Ovary (tissue), 10 donors: ENCODE measurements at regions of chr1 and their contacts with region 1.

Region 1: DNA sequence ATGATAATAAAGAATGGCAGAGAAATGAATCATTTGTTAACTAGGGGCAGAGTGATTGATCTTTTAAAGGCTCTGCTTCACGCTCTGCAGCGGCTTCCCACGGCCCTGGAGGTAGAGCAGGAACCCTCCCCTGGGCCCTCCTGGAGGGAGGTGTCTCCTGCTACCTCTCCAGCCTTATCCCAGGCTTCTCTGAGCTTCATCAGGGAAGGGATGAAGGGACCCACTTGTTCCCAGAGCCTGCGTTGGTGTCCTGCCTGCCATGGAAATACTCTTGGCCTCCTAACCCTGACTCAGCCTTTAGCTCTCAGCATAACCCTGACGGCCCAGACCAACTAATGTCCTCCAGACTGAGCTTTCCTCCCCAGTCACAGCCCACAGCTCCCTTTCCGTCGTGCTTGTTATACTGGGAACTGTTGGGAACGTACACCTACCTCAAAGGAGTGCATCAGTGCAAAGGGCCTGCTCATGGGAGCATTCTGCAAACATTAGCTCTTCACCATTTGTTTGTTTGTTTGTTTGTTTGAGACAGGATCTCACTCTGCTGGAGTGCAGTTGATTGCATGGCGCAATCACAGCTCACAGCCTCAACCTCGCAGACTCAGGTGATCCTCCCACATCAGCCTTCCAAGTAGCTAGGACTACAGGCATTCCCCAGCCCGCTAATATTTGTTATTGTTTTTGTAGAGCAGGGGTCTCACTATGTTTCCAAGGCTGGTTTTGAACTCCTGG is 17.4 kb upstream of the HNRNPU start:
- DNase-seq: no peak
- H3K4me3 ChIP-seq: no peak overlapping the region
- H3K27ac ChIP-seq: no peak overlapping the region
- H3K4me1 ChIP-seq: no peaks in the 10 kb centered on the region
- H3K27me3 ChIP-seq: no peaks in the 10 kb centered on the region
- CTCF ChIP-seq: no peak
- EP300 ChIP-seq: no peak
- POLR2A ChIP-seq: no peak

Region 2: DNA sequence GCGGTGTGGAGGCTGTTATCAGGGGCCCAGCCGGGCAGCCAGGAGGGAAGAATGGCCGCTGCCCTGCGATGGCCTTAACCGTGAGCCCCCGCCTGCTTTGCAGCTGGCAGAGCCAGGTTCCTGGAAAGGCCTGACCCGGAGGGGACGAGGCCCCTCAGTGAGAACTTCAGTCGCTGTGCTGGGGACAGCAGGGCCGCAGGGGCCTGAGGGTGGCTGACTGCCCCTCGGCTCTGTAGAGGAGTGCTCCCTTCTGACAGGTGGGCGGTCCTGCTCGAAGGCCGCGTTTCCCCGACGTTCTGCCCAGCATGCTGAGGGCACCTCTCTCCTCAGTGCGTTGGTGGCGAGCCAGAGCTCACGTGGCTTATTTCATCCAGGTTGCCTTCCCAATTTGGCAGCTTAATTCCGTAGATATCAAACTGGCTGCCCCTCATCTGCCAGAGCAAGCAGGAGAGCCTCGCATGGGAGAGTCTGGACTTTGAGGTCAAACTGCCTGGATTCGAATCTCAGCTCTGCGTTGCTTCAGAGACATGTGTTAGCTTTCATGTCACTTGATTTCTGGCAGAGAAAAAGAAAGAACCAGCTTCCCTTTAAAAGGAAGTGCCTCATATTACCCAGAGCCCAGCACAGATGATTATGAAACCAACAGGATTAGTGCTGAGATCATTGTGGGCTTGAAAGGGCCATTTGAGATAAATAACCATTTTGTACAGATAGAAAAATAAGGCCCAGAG is 1386.1 kb before region 1 on chr1:
- intact Hi-C with region 1: no loop called
- DNase-seq: no peak
- H3K4me3 ChIP-seq: no peak overlapping the region
- H3K27ac ChIP-seq: no peak overlapping the region
- H3K4me1 ChIP-seq: no peaks in the 10 kb centered on the region
- H3K27me3 ChIP-seq: no peaks in the 10 kb centered on the region
- CTCF ChIP-seq: no peak
- EP300 ChIP-seq: no peak
- POLR2A ChIP-seq: no peak

Region 3: GRCh38 chr1:244757091-244757939 is 124.4 kb before region 1 on chr1:
- intact Hi-C with region 1: loop called in 1 of 4 experiments (anchors 2 kb)
- DNase-seq: no peak
- H3K4me3 ChIP-seq: no peak overlapping the region
- H3K27ac ChIP-seq: no peak overlapping the region
- H3K4me1 ChIP-seq: peaks cover 8% of the 10 kb centered on the region
- H3K27me3 ChIP-seq: no peaks in the 10 kb centered on the region
- CTCF ChIP-seq: no peak
- EP300 ChIP-seq: no peak
- POLR2A ChIP-seq: no peak

Region 4: GRCh38 chr1:244896550-244896949 is 14.8 kb after region 1 on chr1:
- intact Hi-C with region 1: no loop called
- DNase-seq: no peak
- H3K4me3 ChIP-seq: no peak overlapping the region
- H3K27ac ChIP-seq: no peak overlapping the region
- H3K4me1 ChIP-seq: no peaks in the 10 kb centered on the region
- H3K27me3 ChIP-seq: no peaks in the 10 kb centered on the region
- CTCF ChIP-seq: no peak
- EP300 ChIP-seq: no peak
- POLR2A ChIP-seq: no peak

Region 5: DNA sequence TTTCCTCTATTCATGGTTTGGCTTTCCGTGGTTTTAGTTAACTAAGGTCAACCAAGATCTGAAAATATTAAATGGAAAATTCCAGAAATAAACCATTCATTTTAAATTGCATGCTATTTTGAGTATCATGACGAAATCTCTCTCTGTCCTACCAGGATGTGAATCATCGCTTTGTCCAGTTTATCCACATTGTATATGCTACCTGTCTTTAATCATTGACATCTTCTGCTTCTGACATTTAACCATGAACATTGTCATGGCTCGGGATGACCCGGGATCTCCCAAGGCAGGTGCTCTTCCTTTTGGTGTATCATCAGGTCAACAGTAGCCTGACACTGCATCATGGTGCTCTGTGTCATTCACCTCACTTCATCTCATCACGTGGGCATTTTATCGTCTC is 108.1 kb after region 1 on chr1:
- intact Hi-C with region 1: no loop called
- DNase-seq: no peak
- H3K4me3 ChIP-seq: no peak overlapping the region
- H3K27ac ChIP-seq: no peak overlapping the region
- H3K4me1 ChIP-seq: no peaks in the 10 kb centered on the region
- H3K27me3 ChIP-seq: no peaks in the 10 kb centered on the region
- CTCF ChIP-seq: no peak
- EP300 ChIP-seq: no peak
- POLR2A ChIP-seq: no peak

Region 6: DNA sequence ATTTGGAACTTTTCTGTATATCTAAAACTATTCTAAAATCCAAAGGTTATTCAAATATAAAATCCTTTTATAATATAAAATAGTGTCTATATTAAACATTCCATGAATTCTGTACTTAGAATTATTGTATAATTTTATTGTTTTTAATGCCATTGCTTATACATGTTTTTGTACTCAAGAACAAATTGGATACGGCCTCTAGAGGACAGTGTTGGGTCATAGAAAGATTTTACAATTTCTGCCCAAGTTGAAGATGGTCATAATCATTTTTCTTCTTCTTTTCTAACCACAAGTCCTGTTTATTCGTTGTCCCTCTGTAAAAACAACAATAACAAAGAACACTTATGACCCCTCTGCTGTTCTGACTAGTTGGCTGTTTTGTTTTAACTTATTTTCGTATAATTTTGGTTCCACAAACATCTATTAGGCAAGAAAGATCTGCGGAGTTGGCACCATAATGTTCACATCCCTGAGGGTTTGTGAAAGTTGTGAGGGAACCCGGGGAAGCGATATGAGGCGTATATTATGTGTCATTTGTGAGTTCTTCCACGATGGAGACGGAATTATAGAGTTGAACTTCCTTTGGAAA is 197.4 kb after region 1 on chr1:
- intact Hi-C with region 1: no loop called
- DNase-seq: no peak
- H3K4me3 ChIP-seq: no peak overlapping the region
- H3K27ac ChIP-seq: no peak overlapping the region
- H3K4me1 ChIP-seq: no peaks in the 10 kb centered on the region
- H3K27me3 ChIP-seq: no peaks in the 10 kb centered on the region
- CTCF ChIP-seq: no peak
- EP300 ChIP-seq: no peak
- POLR2A ChIP-seq: no peak